Motor neuron (in vitro differentiated cells): ENCODE measurements at regions of chr3 and their contacts with region 1.

Region 1: DNA sequence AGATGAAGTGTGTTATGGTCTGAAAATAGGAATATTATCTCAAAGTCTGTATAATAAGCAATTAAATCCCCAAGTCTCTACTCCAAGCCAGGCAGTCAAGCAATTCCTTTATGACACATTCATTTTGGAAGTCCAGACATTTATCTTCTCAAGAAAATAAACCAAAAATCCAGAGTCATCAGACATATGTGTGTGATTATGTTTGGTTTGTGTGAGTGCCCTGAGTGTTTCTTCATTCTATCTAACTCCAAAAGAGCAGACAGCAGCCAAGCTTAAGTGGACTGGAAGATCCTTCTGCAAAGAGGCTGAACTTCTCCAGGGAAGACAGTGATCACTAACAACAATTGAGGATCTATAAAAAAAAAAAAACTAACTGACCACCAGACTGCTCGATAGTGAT is 239.8 kb downstream of the STAG1 start:
- ATAC-seq: no peak
- H3K4me3 ChIP-seq: no peak overlapping the region
- H3K27ac ChIP-seq: no peak overlapping the region
- H3K4me1 ChIP-seq: peaks cover 0 to 3% of the 10 kb centered on the region in 2 donors

Region 2: GRCh38 chr3:136414476-136414875 is 97.9 kb before region 1 on chr3:
- in situ Hi-C with region 1: loop called in 1 of 9 experiments (anchors 25 kb)
- ATAC-seq: no peak
- H3K4me3 ChIP-seq: no peak overlapping the region
- H3K27ac ChIP-seq: no peak overlapping the region
- H3K4me1 ChIP-seq: no peaks in the 10 kb centered on the region

Region 3: GRCh38 chr3:136909187-136909586 is 396.8 kb after region 1 on chr3:
- in situ Hi-C with region 1: no loop called
- ATAC-seq: peak in 3 of 8 experiments; percentile 42 to 44 (median 43)
- H3K4me3 ChIP-seq: no peak overlapping the region
- H3K27ac ChIP-seq: no peak overlapping the region
- H3K4me1 ChIP-seq: no peaks in the 10 kb centered on the region

Region 4: DNA sequence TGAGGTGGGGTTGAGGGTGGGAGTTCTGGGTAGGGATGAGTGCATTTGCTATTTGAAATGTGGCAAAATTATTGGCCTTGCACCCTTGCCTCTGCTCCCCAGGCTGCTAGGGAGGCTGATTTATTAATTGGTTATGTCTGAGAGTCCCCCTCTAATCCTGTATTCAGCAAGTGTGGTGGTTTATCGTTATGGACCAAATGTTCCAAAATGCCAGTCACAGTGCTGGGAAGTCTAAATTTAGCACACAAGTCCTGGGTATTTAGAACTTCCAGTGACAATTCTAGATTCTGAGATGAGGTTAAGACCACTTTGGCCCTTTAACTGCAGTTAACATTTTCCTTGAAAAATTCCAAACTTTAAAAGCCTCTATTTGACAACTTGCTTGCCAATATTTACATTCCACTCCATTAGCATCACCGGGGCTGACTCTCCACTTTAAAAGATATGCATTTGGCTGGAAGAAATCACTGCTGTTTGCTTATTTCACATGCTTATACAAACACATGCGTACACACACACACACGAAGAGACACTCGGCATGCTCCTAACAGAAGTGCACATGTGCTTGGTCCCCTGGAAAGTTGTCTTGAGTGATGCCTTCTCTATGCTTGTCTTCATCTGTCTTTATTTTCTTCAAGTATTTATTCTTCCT is 693.1 kb after region 1 on chr3:
- in situ Hi-C with region 1: no loop called
- ATAC-seq: peak in 6 of 8 experiments; percentile 32 to 94 (median 73)
- H3K4me3 ChIP-seq: no peak overlapping the region
- H3K27ac ChIP-seq: no peak overlapping the region
- H3K4me1 ChIP-seq: peaks cover 2 to 7% of the 10 kb centered on the region in 2 donors